Activated CD4-positive, alpha-beta T cell treated with anti-CD3 and anti-CD28 coated beads, Interleukin-2, amount 10 ng/mL, durations not matched to agents 24 days and 14 days (primary cell): ENCODE measurements at regions of chr1 and their contacts with region 1.

Region 1: DNA sequence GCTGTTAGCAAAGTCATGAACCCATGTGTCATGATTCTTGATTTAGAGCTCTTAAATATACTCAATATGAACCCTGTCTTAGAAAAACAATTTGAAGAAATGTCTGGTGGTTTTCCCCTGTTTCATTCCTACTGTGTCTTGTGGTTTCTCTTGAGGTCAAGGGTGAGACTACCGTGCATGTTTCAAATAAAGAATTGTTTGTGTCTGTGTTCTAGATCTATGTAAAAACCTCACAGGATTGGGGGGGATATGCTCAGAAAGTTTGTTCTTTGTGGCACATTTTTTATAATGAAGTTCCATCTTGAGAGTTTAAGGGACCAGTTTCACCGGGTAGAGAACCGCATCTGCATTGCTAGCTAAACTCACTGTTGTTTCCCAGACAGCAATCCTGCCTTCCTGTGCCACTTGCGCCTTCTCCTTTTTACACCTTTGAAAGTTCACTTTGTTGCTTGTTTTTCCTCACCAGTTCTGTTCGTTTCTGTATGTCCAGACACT is 30.9 kb upstream of the CACYBP start:
- DNase-seq: peak; percentile 85
- H3K4me3 Mint-ChIP-seq: peak overlapping the region; percentile 85
- H3K27ac Mint-ChIP-seq: peak overlapping the region; percentile 96
- H3K4me1 Mint-ChIP-seq: peaks cover 64% of the 10 kb centered on the region
- H3K27me3 Mint-ChIP-seq: no peaks in the 10 kb centered on the region

Region 2: GRCh38 chr1:174159252-174160108 is 809.3 kb before region 1 on chr1 and contains the start of gene RABGAP1L:
- intact Hi-C with region 1: loop called (anchors 2 kb)
- DNase-seq: peak; percentile 98
- H3K4me3 Mint-ChIP-seq: peak within 1 kb of the TSS; percentile 93
- H3K27ac Mint-ChIP-seq: peak within 1 kb of the TSS; percentile 98
- H3K4me1 Mint-ChIP-seq: peaks cover 52% of the 10 kb centered on the region
- H3K27me3 Mint-ChIP-seq: no peaks in the 10 kb centered on the region
- total RNA-seq, gene RABGAP1L: 36.9 and 37.2 TPM in 2 replicates

Region 3: DNA sequence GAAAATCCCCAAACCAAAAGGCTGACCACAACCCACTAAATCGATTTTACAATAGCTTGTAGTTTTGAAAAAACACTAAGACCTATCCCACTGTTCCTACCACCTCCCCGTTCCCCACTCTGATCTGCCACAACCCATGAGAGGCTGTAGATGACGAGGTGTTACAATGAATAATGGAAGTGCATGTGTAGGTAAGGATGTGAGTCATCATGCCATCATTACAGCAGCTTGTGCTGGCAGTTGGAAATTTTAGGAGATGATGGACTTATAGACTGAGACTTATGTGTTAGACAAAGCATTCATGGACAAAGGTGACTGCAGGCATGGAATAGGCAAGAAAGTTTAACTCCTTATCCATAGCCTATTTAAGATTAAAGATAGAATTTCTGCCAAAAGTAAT is 153.8 kb before region 1 on chr1:
- intact Hi-C with region 1: loop called (anchors 2 kb)
- DNase-seq: peak; percentile 60
- H3K4me3 Mint-ChIP-seq: no peak overlapping the region
- H3K27ac Mint-ChIP-seq: peak overlapping the region; percentile 14
- H3K4me1 Mint-ChIP-seq: peaks cover 18% of the 10 kb centered on the region
- H3K27me3 Mint-ChIP-seq: no peaks in the 10 kb centered on the region

Region 4: DNA sequence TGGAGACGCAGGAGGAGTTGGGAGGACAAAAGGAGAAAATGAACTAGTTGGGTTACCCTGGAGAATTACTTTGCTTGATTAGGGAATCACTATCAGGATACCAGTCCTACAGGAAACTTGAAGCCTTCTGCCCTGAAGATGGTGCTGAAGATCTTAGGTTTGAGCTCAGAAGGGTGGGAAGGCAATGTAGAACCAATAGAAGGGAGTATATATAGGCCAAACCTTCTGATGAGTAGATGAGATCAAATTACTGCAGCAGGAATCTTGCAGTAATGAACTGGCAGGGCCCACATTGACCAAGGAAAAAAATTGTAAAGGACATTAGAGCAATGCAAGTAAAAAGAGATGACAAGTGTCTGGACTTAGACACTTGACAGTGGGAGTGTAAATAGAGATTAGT is 85.4 kb before region 1 on chr1:
- intact Hi-C with region 1: no loop called
- DNase-seq: peak; percentile 59
- H3K4me3 Mint-ChIP-seq: no peak overlapping the region
- H3K27ac Mint-ChIP-seq: no peak overlapping the region
- H3K4me1 Mint-ChIP-seq: no peaks in the 10 kb centered on the region
- H3K27me3 Mint-ChIP-seq: no peaks in the 10 kb centered on the region

Region 5: DNA sequence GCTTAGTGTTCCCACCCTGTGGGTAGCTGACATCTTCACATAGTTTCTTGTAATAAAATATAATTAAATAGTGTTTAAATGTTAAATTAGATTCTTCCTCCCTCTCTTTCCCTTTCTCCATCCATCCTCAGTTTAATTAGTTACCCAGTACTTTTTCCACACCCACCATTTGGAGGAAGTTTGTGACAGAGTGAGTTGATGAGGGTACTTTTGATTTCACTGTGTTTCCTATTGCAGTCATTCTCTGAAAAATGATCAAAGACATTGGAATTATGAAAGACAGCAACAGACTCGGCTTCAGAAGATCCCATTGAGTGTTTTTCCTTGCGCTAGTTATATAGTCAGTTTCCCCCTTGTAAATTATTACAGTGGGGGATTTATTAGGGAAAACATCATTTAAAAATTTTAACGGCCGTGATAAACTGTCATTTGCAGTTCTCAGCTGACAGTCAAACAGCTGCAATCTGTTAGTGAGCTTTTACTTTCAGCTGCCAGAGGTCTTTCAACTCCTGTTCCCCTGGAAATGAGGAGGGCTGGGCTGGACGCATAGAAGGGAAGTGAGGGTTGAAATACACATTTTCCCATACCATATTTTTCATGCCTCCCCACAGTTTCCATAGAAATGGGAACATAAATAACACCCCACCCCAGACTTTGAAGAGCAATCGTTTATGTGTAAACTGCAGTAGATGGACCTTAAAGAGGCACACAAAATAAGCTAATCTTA is 30.4 kb before region 1 on chr1:
- intact Hi-C with region 1: loop called (anchors 2 kb)
- DNase-seq: no peak
- H3K4me3 Mint-ChIP-seq: peak overlapping the region; percentile 50
- H3K27ac Mint-ChIP-seq: peak overlapping the region; percentile 73
- H3K4me1 Mint-ChIP-seq: peaks cover 8% of the 10 kb centered on the region
- H3K27me3 Mint-ChIP-seq: no peaks in the 10 kb centered on the region

Region 6: GRCh38 chr1:174982971-174983689 is 14.3 kb after region 1 on chr1:
- intact Hi-C with region 1: loop called (anchors 2 kb)
- DNase-seq: peak; percentile 88
- H3K4me3 Mint-ChIP-seq: no peak overlapping the region
- H3K27ac Mint-ChIP-seq: no peak overlapping the region
- H3K4me1 Mint-ChIP-seq: peaks cover 16% of the 10 kb centered on the region
- H3K27me3 Mint-ChIP-seq: no peaks in the 10 kb centered on the region

Region 7: DNA sequence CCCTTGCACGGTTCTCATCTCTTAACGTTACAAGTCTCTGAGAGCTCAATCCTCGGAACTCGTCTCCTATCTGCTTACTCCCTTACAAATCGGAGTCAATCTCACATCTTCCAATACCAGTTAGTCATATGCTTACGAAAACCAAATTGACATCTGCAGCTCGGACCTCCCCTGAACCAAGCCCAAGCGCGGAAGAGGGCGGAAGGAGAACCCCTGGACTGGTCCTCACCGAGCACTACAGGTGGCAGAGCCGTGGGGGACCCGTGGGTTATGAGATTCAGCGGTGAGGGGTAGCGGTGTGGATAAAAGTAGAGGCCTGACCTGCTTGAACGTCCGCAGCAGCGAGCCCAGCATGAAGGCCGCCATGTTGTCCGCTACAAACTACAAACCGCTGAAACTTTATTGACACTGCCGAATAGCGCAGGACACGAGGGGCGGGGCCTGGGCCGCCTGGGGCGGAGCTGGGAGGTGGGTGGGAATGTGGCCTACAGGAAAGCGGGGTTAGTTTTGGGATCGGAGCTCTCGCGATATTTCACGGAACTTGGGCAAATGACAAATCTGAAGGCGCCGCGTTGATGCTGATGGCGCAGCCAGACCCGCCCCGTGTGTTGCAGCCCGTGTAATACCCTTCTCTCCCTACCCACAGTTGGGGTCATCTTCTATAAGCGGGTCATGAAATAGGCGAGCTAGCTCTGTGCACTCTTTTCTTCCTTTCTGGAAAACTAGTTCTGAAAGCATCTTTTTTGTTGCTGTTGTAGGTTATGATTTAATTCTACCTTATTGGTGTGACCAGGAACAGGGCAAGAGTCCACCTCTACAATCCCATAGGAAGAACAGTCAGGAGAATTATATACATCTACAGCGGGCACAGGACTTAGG is 54.5 kb after region 1 on chr1 and contains the start of gene MRPS14:
- intact Hi-C with region 1: loop called (anchors 1 kb)
- DNase-seq: peak; percentile 99
- H3K4me3 Mint-ChIP-seq: peak within 1 kb of the TSS; percentile 91
- H3K27ac Mint-ChIP-seq: peak within 1 kb of the TSS; percentile 90
- H3K4me1 Mint-ChIP-seq: peaks cover 23% of the 10 kb centered on the region
- H3K27me3 Mint-ChIP-seq: no peaks in the 10 kb centered on the region
- total RNA-seq, gene MRPS14: 28.9 and 33.5 TPM in 2 replicates